ENCODE measurements at regions of chr3 and their contacts with region 1.

Region 1: DNA sequence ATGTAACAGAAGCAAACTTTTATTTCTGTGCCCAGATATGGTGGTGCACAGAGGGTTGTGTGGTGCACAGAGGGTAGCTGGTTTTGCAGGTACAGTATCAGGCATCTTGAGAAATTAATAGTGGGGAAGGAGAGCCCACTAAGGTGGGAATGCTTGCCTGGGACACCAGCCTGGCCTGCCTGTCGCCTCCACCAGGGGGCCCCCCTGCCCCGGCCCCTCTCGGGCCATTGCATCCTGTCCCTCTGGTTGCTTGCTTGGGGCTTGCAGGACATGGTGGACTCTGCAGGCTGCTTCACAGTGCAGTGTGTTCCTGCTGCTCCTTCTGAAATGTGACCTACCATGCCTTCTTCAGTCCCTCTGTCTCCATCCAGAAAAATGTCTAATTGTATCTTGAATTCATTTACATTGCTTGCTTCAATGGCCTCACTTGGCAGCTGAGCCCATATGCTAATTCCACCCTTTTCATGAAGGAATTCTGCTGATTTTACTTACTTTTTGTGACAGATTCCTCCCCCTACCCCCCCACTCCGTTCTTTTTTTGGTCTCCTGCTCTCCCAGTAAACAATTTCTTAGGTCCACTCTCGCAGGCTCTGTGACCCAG is 73.6 kb downstream of the EEFSEC start:
- DNase-seq: peak in 1 of 2 donors; percentile 18
- ATAC-seq: peak in 1 of 2 donors; percentile 56
- H3K4me3 ChIP-seq: no peak overlapping the region
- H3K27ac ChIP-seq: no peak overlapping the region
- H3K4me1 ChIP-seq: peaks cover 5 to 9% of the 10 kb centered on the region in 2 donors
- H3K27me3 ChIP-seq: no peaks in the 10 kb centered on the region
- CTCF ChIP-seq: peak; percentile 45 to 69 (median 60)
- POLR2A ChIP-seq: no peak

Region 2: GRCh38 chr3:127406309-127407025 is 820.4 kb before region 1 on chr3:
- in situ Hi-C with region 1: no loop called
- intact Hi-C with region 1: no loop called
- DNase-seq: no peak
- ATAC-seq: no peak
- H3K4me3 ChIP-seq: no peak overlapping the region
- H3K27ac ChIP-seq: no peak overlapping the region
- H3K4me1 ChIP-seq: no peaks in the 10 kb centered on the region
- H3K27me3 ChIP-seq: no peaks in the 10 kb centered on the region
- CTCF ChIP-seq: no peak
- POLR2A ChIP-seq: no peak

Region 3: GRCh38 chr3:128322066-128323022 is 95.4 kb after region 1 on chr3:
- in situ Hi-C with region 1: no loop called
- intact Hi-C with region 1: loop called (anchors 1 kb)
- DNase-seq: peak; percentile 22 to 44
- ATAC-seq: no peak
- H3K4me3 ChIP-seq: no peak overlapping the region
- H3K27ac ChIP-seq: no peak overlapping the region
- H3K4me1 ChIP-seq: peaks cover 7 to 21% of the 10 kb centered on the region in 2 donors
- H3K27me3 ChIP-seq: no peaks in the 10 kb centered on the region
- CTCF ChIP-seq: peak; percentile 12 to 63 (median 56)
- POLR2A ChIP-seq: no peak

Measured in gastrocnemius medialis (tissue), 4 donors.